MCF 10A (cell line): ENCODE measurements at regions of chrX and their contacts with region 1.

Region 1: GRCh38 chrX:80285131-80285773 is 135.0 kb upstream of the TENT5D start:
- DNase-seq: peak; percentile 49
- H3K4me3 Mint-ChIP-seq: no peak overlapping the region
- H3K27ac Mint-ChIP-seq: no peak overlapping the region
- H3K4me1 Mint-ChIP-seq: no peaks in the 10 kb centered on the region
- H3K27me3 Mint-ChIP-seq: no peaks in the 10 kb centered on the region
- CTCF ChIP-seq: peak; percentile 50

Region 2: GRCh38 chrX:79477691-79478090 is 807.6 kb before region 1 on chrX:
- CTCF ChIA-PET with region 1: no interaction called
- POLR2A ChIA-PET with region 1: no interaction called
- intact Hi-C with region 1: loop called (anchors 5 kb)
- DNase-seq: peak; percentile 19
- H3K4me3 Mint-ChIP-seq: no peak overlapping the region
- H3K27ac Mint-ChIP-seq: peak overlapping the region; percentile 59
- H3K4me1 Mint-ChIP-seq: no peaks in the 10 kb centered on the region
- H3K27me3 Mint-ChIP-seq: no peaks in the 10 kb centered on the region
- CTCF ChIP-seq: no peak

Region 3: DNA sequence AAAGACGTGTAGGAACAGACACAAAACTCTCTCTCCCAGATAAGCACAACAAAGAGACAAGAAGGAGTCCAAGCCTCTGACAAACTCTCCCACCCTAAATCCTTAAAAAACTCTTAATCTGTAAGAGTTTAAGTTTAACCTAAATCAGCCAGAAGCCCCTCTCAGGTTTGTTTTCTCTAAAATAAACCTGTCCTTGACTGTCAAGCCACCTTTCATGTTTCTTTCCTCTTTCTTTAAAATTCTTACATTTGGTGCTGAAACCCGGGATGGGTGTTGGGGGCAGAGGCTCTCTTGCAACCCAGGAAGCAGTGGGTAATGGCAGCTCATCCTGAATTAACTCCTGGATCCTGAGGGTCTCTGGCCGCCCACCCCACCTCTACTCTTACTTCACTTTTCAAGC is 27.2 kb after region 1 on chrX:
- CTCF ChIA-PET with region 1: no interaction called
- POLR2A ChIA-PET with region 1: no interaction called
- intact Hi-C with region 1: no loop called
- DNase-seq: no peak
- H3K4me3 Mint-ChIP-seq: no peak overlapping the region
- H3K27ac Mint-ChIP-seq: no peak overlapping the region
- H3K4me1 Mint-ChIP-seq: no peaks in the 10 kb centered on the region
- H3K27me3 Mint-ChIP-seq: no peaks in the 10 kb centered on the region
- CTCF ChIP-seq: no peak

Region 4: GRCh38 chrX:80578517-80579105 is 293.4 kb after region 1 on chrX:
- CTCF ChIA-PET with region 1: interaction called, 43 read pairs
- POLR2A ChIA-PET with region 1: no interaction called
- intact Hi-C with region 1: loop called (anchors 1 kb)
- DNase-seq: peak; percentile 45
- H3K4me3 Mint-ChIP-seq: no peak overlapping the region
- H3K27ac Mint-ChIP-seq: no peak overlapping the region
- H3K4me1 Mint-ChIP-seq: no peaks in the 10 kb centered on the region
- H3K27me3 Mint-ChIP-seq: no peaks in the 10 kb centered on the region
- CTCF ChIP-seq: peak; percentile 46